MCF 10A (cell line): ENCODE measurements at regions of chr9 and their contacts with region 1.

Region 1: GRCh38 chr9:120936011-120936763 is 9.6 kb upstream of the TRAF1 start:
- DNase-seq: peak; percentile 96
- H3K4me3 Mint-ChIP-seq: peak overlapping the region; percentile 67
- H3K27ac Mint-ChIP-seq: peak overlapping the region; percentile 81
- H3K4me1 Mint-ChIP-seq: peaks cover 39% of the 10 kb centered on the region
- H3K27me3 Mint-ChIP-seq: no peaks in the 10 kb centered on the region
- CTCF ChIP-seq: peak; percentile 73

Region 2: DNA sequence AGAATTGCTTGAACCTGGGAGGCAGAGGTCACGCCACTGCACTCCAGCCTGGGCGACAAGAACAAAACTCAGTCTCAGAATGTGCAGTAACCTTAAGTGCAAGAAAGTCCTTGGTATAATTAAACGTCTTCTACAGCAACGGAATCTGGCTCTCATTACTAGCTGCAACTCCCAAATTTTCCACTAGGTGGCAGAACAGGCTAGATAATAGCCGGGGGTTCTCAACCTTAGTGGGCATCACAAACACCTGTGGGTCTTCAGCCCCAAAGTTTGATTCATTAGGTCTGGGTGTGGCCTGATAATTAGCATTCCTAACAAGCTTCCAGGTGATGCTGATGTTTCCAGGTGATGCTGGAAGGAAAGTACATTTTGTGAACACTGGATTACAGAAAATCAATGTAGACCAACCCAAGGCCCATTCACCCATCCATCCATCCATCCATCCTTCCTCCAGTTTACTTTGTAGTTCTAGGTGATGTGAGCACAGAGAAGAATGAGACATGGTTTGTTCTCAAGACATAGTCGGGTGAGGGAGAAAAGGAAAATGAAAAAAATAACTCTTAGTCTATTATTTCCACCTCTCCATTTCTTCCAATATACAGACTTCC is 180.3 kb before region 1 on chr9:
- CTCF ChIA-PET with region 1: interaction called, 31 read pairs
- POLR2A ChIA-PET with region 1: interaction called, 11 read pairs
- intact Hi-C with region 1: loop called (anchors 1 kb)
- DNase-seq: peak; percentile 71
- H3K4me3 Mint-ChIP-seq: no peak overlapping the region
- H3K27ac Mint-ChIP-seq: no peak overlapping the region
- H3K4me1 Mint-ChIP-seq: peaks cover 5% of the 10 kb centered on the region
- H3K27me3 Mint-ChIP-seq: no peaks in the 10 kb centered on the region
- CTCF ChIP-seq: peak; percentile 79

Region 3: GRCh38 chr9:120842690-120843499 is 93.3 kb before region 1 on chr9 and contains the start of gene PSMD5:
- CTCF ChIA-PET with region 1: interaction called, 6 read pairs
- POLR2A ChIA-PET with region 1: interaction called, 28 read pairs
- intact Hi-C with region 1: loop called (anchors 1 kb)
- DNase-seq: peak; percentile 100
- H3K4me3 Mint-ChIP-seq: peak within 1 kb of the TSS; percentile 100
- H3K27ac Mint-ChIP-seq: peak within 1 kb of the TSS; percentile 99
- H3K4me1 Mint-ChIP-seq: peaks cover 31% of the 10 kb centered on the region
- H3K27me3 Mint-ChIP-seq: no peaks in the 10 kb centered on the region
- CTCF ChIP-seq: no peak
- total RNA-seq, gene PSMD5: 71.0 and 91.0 TPM in 2 replicates

Region 4: DNA sequence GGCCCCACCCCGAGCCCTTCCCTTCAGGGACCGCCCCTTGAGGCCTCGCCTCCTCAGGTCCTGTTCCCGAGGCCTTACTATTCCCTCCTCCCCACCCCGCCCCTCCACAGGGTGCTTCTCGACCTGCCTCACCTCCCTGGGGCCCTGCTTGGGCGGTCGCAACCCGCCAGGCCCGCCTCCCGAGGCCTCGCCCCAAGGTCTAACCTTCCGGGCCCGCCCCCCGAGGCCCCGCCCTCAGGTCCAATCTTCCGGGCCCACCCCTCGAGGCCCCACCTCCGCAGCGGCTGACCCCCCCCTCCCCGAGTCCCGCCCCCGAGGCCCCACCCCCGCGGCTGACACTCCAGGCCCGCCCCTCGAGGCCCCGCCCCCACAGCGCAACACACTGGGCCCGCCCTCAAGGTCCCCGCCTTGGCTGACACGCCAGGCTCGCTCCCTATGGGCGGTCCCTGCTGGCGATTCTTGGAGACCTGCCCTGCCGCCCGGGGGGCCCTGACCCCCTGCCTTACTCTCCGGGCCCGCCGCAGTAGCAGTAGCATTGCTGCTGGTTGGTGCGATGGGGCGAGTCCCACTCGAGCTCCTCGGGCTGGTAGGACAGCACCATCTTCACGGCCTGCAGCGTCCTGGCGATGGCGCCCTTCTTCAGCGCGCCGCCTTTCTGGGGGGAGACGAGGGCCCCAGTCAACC is 67.4 kb before region 1 on chr9:
- CTCF ChIA-PET with region 1: interaction called, 29 read pairs
- POLR2A ChIA-PET with region 1: interaction called, 11 read pairs
- intact Hi-C with region 1: loop called (anchors 1 kb)
- DNase-seq: peak; percentile 99
- H3K4me3 Mint-ChIP-seq: peak overlapping the region; percentile 72
- H3K27ac Mint-ChIP-seq: peak overlapping the region; percentile 35
- H3K4me1 Mint-ChIP-seq: peaks cover 19% of the 10 kb centered on the region
- H3K27me3 Mint-ChIP-seq: no peaks in the 10 kb centered on the region
- CTCF ChIP-seq: no peak

Region 5: DNA sequence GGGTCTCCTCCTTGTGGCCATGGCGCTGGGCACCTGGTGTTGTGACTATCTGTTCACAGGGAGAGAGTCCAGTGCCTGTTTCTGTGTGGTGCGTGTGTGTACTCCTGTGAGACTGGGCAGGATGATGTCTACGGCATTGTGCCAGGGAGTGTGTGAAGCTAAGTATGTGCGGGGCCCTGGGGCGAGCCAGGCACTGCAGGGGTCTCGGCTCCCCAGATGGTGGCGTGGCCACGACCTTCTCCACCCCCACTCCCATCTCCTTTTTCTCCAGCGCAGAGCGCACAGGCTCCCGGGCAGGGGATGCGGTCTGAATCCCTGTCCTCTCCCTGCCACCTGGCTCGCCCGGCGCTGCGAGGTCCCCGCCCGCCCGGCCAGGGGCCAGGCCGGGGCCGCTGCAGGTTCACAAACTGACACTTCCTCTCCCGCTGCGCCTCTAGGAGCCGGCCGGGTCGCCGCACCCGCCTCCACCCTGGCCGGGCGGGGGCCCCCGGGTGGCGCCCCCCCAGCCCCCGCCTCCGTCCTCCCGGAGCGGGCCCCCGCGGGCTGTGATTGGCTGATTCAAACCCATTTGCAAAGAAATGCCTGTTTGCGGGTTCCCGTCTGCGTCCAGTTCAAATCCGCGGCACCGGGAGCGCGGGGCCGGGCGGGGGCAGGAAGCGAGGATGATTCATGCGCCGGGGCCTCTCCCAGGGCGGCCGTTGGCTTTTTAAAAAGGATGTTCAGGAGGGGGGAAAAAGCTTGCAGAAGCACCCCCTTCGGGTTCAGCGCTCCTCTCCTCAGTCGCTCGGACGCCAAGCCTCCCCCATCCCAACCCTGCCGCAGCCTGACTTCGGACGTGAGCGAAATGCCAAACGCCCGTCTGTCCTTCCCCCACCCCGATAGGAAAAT is 60.0 kb before region 1 on chr9:
- CTCF ChIA-PET with region 1: interaction called, 29 read pairs
- POLR2A ChIA-PET with region 1: interaction called, 11 read pairs
- intact Hi-C with region 1: loop called (anchors 1 kb)
- DNase-seq: peak; percentile 93
- H3K4me3 Mint-ChIP-seq: peak overlapping the region; percentile 76
- H3K27ac Mint-ChIP-seq: peak overlapping the region; percentile 33
- H3K4me1 Mint-ChIP-seq: peaks cover 40% of the 10 kb centered on the region
- H3K27me3 Mint-ChIP-seq: no peaks in the 10 kb centered on the region
- CTCF ChIP-seq: no peak

Region 6: GRCh38 chr9:120886490-120886967 is 49.7 kb before region 1 on chr9:
- CTCF ChIA-PET with region 1: interaction called, 17 read pairs
- POLR2A ChIA-PET with region 1: no interaction called
- intact Hi-C with region 1: no loop called
- DNase-seq: peak; percentile 29
- H3K4me3 Mint-ChIP-seq: no peak overlapping the region
- H3K27ac Mint-ChIP-seq: no peak overlapping the region
- H3K4me1 Mint-ChIP-seq: no peaks in the 10 kb centered on the region
- H3K27me3 Mint-ChIP-seq: no peaks in the 10 kb centered on the region
- CTCF ChIP-seq: no peak

Region 7: DNA sequence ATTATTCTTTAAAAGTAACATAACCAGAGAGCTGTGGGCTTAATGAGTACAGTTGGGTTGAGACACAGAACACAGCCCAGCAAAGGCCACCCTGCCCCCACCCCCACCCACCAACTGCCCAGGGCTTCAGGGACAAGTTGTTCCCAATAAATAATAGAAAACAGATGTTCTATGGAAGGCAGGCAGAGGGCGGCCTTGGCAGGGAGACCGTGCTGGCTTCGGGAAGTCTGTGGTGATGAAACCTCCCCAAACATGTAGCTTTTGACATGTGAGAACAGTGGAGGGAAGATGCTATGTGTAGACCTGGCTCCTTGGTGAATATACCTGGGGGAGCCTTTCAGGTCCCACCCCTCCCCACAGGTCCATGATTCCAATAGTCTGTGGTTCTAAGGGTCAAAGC is 19.6 kb before region 1 on chr9:
- CTCF ChIA-PET with region 1: interaction called, 71 read pairs
- POLR2A ChIA-PET with region 1: interaction called, 32 read pairs
- intact Hi-C with region 1: loop called (anchors 1 kb)
- DNase-seq: peak; percentile 68
- H3K4me3 Mint-ChIP-seq: no peak overlapping the region
- H3K27ac Mint-ChIP-seq: peak overlapping the region; percentile 47
- H3K4me1 Mint-ChIP-seq: peaks cover 33% of the 10 kb centered on the region
- H3K27me3 Mint-ChIP-seq: no peaks in the 10 kb centered on the region
- CTCF ChIP-seq: peak; percentile 22